Naive thymus-derived CD4-positive, alpha-beta T cell (primary cell): ENCODE measurements at regions of chr17 and their contacts with region 1.

Region 1: DNA sequence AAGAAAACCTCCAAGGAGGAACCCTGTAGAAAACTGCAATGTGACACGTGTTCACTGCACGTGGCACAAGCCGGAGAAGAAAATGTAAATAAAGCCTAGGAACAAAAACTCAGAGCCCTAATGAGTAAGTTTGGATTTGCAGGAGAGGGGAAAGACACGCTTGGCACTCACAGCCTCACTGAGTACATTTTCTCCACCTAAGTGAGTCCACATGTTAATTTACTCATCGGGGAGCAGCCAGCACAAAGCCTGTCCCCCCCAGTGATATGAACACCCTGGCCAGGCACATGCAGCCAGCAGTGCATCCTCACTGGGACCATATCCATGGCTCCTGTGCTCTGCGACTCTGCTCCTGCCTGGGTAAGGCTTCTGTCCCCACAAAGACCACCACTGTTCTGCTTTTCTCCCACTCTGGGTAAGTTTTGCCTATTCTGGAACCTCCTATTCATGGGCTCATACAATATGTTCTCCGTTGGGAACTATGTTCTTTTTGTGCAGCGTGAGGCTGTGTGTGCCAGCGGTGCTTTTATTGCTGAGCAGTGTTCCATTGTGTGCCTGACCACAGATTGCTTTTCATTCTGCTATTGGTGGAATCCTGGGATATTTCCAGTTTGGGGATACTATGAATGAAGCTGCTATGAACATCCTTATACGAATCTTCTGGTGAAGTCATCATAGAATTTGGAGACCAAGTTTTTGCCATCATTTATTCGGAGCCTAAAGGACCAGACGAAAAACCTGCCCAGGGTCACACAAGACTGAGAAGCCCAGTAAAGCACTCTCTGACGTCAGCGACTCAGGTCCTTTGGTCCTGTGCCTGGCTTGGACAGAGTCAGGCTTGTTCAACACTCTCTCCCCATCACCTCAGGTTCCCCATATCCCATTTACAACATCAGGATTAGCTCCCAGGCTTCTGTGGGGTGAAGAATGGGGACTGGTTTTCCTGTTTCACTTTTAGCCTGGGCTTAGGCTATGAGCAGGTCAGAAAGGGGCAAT is 53.3 kb downstream of the RNF112 start:
- DNase-seq: no peak
- ATAC-seq: no peak
- H3K4me3 ChIP-seq: no peak overlapping the region
- H3K4me3 Mint-ChIP-seq: peak overlapping the region in 8 of 10 donors; percentile 54 to 83 (median 62)
- H3K27ac ChIP-seq: peak overlapping the region; percentile 48
- H3K27ac Mint-ChIP-seq: peak overlapping the region in 8 of 9 donors; percentile 72 to 96 (median 86)
- H3K4me1 ChIP-seq: peaks cover 25 to 48% of the 10 kb centered on the region in 2 donors
- H3K4me1 Mint-ChIP-seq: peaks cover 17 to 55% (median 44%) of the 10 kb centered on the region in 7 donors
- H3K27me3 ChIP-seq: no peaks in the 10 kb centered on the region
- H3K27me3 Mint-ChIP-seq: no peaks in the 10 kb centered on the region

Region 2: GRCh38 chr17:19377602-19378392 is 86.5 kb before region 1 on chr17:
- CTCF ChIA-PET with region 1: no interaction called
- POLR2A ChIA-PET with region 1: interaction called, 4 read pairs
- intact Hi-C with region 1: loop called in 1 of 2 experiments (anchors 5 kb)
- DNase-seq: peak; percentile 85 to 95 (median 92)
- ATAC-seq: peak; percentile 89
- H3K4me3 ChIP-seq: peak overlapping the region; percentile 99
- H3K4me3 Mint-ChIP-seq: peak overlapping the region; percentile 83 to 100 (median 97)
- H3K27ac ChIP-seq: peak overlapping the region; percentile 81
- H3K27ac Mint-ChIP-seq: peak overlapping the region; percentile 83 to 99 (median 97)
- H3K4me1 ChIP-seq: peaks cover 2 to 6% of the 10 kb centered on the region in 2 donors
- H3K4me1 Mint-ChIP-seq: peaks cover 6 to 29% (median 20%) of the 10 kb centered on the region in 7 donors
- H3K27me3 ChIP-seq: no peaks in the 10 kb centered on the region
- H3K27me3 Mint-ChIP-seq: no peaks in the 10 kb centered on the region

Region 3: DNA sequence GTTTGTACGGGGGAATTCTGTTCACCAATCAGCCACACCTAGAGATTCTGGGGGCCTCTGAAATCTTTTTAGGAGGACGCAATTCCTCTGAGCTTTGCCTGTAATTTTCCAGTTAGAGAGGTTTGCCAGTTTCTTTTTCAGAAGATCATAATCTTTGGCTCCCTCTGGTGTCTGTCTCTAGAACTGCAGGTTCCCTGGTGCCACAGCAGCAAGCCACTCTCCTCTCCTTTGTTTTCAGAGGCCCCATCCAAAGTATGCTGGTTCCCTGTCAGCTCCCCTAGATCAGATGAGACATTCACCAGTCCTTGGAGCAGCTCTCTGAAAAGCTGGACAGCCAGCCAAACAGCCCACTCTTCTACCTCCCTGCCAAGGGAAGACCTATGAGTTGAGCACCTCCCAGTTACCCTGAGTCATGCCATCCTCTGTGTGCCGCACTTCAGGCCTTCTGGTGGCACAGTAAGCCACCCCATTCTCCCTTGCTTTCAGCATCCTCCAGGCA is 17.2 kb before region 1 on chr17:
- CTCF ChIA-PET with region 1: interaction called, 5 read pairs
- POLR2A ChIA-PET with region 1: no interaction called
- intact Hi-C with region 1: loop called in 1 of 2 experiments (anchors 2 kb)
- DNase-seq: peak; percentile 29 to 83 (median 66)
- ATAC-seq: peak; percentile 81
- H3K4me3 ChIP-seq: no peak overlapping the region
- H3K4me3 Mint-ChIP-seq: no peak overlapping the region
- H3K27ac ChIP-seq: no peak overlapping the region
- H3K27ac Mint-ChIP-seq: peak overlapping the region in 2 of 9 donors; percentile 10 to 35
- H3K4me1 ChIP-seq: no peaks in the 10 kb centered on the region
- H3K4me1 Mint-ChIP-seq: peaks cover 0 to 6% (median 4%) of the 10 kb centered on the region in 7 donors
- H3K27me3 ChIP-seq: no peaks in the 10 kb centered on the region
- H3K27me3 Mint-ChIP-seq: peaks cover 9 to 25% (median 14%) of the 10 kb centered on the region in 5 donors

Region 4: GRCh38 chr17:19507775-19508576 is 43.6 kb after region 1 on chr17:
- CTCF ChIA-PET with region 1: interaction called, 3 read pairs
- POLR2A ChIA-PET with region 1: no interaction called
- intact Hi-C with region 1: loop called in 1 of 2 experiments (anchors 2 kb)
- DNase-seq: peak; percentile 82 to 96 (median 90)
- ATAC-seq: peak; percentile 85
- H3K4me3 ChIP-seq: peak overlapping the region; percentile 99
- H3K4me3 Mint-ChIP-seq: peak overlapping the region; percentile 87 to 99 (median 91)
- H3K27ac ChIP-seq: peak overlapping the region; percentile 67
- H3K27ac Mint-ChIP-seq: peak overlapping the region; percentile 95 to 99 (median 96)
- H3K4me1 ChIP-seq: peaks cover 0 to 6% of the 10 kb centered on the region in 2 donors
- H3K4me1 Mint-ChIP-seq: peaks cover 8 to 13% (median 11%) of the 10 kb centered on the region in 7 donors
- H3K27me3 ChIP-seq: no peaks in the 10 kb centered on the region
- H3K27me3 Mint-ChIP-seq: peaks cover 0 to 24% (median 0%) of the 10 kb centered on the region in 5 donors